PC-9 (cell line): ENCODE measurements at regions of chr12 and their contacts with region 1.

Region 1: DNA sequence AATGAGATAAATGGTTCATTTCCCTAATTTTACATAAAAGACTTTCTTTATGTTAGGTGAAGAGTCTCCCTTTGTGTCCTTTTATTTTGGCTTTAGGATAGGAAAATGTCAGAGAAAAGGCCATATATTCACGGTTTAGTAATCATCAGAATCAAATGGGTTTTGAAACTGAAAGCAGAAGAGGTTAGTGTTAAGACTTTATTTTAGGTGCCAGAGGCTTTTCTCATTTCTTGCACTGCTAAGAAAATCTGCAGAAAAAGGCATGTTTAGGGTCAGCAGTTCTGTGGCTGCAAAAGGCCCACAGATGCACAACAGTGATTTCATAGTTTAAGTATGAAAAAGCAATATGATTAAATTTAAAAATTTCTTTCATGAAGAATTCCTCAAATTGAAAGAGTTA is 80.4 kb upstream of the SINHCAF start:
- DNase-seq: no peak
- H3K4me3 ChIP-seq: no peak overlapping the region
- H3K27ac ChIP-seq: no peak overlapping the region
- H3K4me1 ChIP-seq: no peaks in the 10 kb centered on the region
- H3K27me3 ChIP-seq: no peaks in the 10 kb centered on the region
- CTCF ChIP-seq: no peak

Region 2: GRCh38 chr12:31423405-31423804 is 17.1 kb after region 1 on chr12:
- CTCF ChIA-PET with region 1: no interaction called
- POLR2A ChIA-PET with region 1: no interaction called
- intact Hi-C with region 1: no loop called
- DNase-seq: no peak
- H3K4me3 ChIP-seq: no peak overlapping the region
- H3K27ac ChIP-seq: no peak overlapping the region
- H3K4me1 ChIP-seq: no peaks in the 10 kb centered on the region
- H3K27me3 ChIP-seq: no peaks in the 10 kb centered on the region
- CTCF ChIP-seq: no peak

Region 3: DNA sequence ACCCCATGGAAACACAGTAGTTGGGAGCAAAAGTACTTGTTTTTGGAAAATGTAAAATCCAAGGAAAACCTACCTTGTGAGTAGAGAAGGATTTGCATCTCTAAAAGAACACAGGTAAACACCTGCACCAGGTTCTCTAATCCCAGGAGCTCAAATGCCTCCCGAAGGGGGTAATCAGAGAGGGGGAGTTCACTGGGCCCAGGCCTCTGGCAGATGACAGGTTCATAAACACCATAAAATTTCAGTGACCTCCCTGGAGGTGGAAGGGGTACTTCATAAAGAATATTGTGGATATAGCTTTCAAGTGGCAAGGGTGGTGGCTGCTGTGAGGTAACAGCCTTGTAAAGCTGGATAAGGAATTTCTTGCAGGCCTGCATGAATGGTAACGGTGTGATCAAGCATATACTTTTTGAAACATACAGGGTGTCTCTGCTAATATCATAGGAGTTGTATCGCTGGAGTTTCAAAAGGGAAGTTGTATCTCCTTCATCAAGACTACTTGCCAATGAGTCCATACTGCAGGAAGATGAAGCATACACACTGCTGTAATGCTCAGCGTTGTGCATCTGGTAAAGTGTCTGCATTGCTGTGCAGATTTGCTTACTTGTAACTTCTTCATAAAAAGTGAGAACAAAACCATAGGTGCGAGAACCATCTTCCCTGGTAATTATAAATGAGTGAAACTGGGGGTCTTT is 73.3 kb after region 1 on chr12:
- CTCF ChIA-PET with region 1: no interaction called
- POLR2A ChIA-PET with region 1: interaction called, 10 read pairs
- intact Hi-C with region 1: no loop called
- DNase-seq: no peak
- H3K4me3 ChIP-seq: no peak overlapping the region
- H3K27ac ChIP-seq: no peak overlapping the region
- H3K4me1 ChIP-seq: no peaks in the 10 kb centered on the region
- H3K27me3 ChIP-seq: no peaks in the 10 kb centered on the region
- CTCF ChIP-seq: no peak

Region 4: DNA sequence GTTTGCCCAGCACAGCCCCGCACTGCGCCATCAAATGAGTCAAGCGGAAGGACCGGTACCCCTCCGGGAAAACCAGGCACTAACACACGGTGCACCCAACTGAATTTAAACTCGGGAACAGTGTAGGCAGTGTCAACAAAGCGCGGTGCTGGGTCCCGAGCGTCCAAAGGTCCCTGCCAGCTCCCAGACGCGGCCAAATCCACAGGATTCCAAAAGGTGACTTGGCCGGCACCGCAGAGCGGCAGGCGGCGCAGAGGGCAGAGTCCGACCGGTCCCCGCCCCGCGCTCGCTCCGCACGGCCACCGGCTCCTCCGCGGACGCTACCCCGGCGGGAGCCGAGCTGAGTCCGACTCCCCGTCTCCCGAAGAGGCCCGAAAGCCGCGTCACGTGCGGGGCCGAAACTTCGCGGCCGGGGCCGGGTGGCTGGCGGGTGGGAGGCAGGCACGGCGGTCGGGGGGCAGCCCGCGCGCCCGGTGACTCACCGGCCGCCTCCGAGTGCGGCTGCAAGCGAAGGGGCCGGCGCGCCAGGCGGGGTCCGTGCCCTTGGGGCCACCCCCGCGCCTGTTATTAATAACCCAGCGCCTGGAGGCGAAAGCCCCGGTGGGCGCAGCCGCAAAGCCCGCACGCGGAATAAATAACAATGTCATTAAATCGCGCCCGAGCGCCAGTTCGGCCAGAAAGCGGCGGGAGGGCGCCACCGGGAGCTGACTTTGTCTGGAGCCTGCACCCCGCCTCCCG is 183.7 kb after region 1 on chr12:
- CTCF ChIA-PET with region 1: interaction called, 3 read pairs
- POLR2A ChIA-PET with region 1: no interaction called
- intact Hi-C with region 1: loop called (anchors 1 kb)
- DNase-seq: peak; percentile 40 to 64
- H3K4me3 ChIP-seq: peak overlapping the region; percentile 78
- H3K27ac ChIP-seq: no peak overlapping the region
- H3K4me1 ChIP-seq: peaks cover 12% of the 10 kb centered on the region
- H3K27me3 ChIP-seq: no peaks in the 10 kb centered on the region
- CTCF ChIP-seq: no peak

Region 5: GRCh38 chr12:31682136-31682962 is 276.0 kb after region 1 on chr12:
- CTCF ChIA-PET with region 1: no interaction called
- POLR2A ChIA-PET with region 1: no interaction called
- intact Hi-C with region 1: loop called (anchors 1 kb)
- DNase-seq: peak; percentile 68 to 72
- H3K4me3 ChIP-seq: no peak overlapping the region
- H3K27ac ChIP-seq: no peak overlapping the region
- H3K4me1 ChIP-seq: no peaks in the 10 kb centered on the region
- H3K27me3 ChIP-seq: no peaks in the 10 kb centered on the region
- CTCF ChIP-seq: peak; percentile 87